A673 (cell line): ENCODE measurements at regions of chr5 and their contacts with region 1.

Region 1: DNA sequence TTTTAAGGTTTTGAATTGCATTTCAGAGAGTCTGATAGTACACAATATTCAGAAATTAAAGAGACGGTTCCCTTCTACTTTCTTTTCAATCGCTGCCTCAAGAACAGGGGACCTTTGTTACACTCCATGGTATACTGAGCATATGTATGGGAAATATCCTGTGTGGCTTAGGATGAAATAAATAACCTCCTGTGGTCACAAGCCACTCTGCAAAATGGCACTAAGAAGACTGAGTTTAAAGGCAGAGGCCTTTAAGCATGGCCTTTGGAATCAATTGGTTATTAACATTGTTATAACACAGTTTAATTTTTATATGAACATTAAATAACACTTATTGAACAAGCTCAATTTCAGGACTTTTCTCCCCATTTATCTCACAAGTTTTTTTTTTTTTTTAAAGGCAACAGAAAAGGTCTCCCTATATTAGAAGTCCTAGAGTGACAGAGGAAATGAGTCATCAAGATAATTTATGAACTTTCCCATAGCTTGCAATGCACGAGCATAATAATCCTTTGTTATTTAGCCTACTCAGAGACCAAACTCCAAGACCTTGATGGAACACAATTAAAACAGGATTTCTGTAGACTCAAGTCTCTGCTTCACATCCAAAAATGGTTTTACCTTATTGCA is 341.9 kb downstream of the TMEM167A start:
- DNase-seq: peak; percentile 94
- H3K4me3 ChIP-seq: no peak overlapping the region
- H3K27ac ChIP-seq: peak overlapping the region; percentile 54
- H3K4me1 ChIP-seq: peaks cover 28% of the 10 kb centered on the region
- H3K27me3 ChIP-seq: no peaks in the 10 kb centered on the region
- CTCF ChIP-seq: no peak

Region 2: GRCh38 chr5:82694886-82695285 is 40.4 kb before region 1 on chr5:
- CTCF ChIA-PET with region 1: no interaction called
- POLR2A ChIA-PET with region 1: no interaction called
- intact Hi-C with region 1: loop called (anchors 5 kb)
- DNase-seq: no peak
- H3K4me3 ChIP-seq: no peak overlapping the region
- H3K27ac ChIP-seq: no peak overlapping the region
- H3K4me1 ChIP-seq: no peaks in the 10 kb centered on the region
- H3K27me3 ChIP-seq: no peaks in the 10 kb centered on the region
- CTCF ChIP-seq: no peak

Region 3: GRCh38 chr5:82749461-82749820 is 14.2 kb after region 1 on chr5:
- CTCF ChIA-PET with region 1: interaction called, 3 read pairs
- POLR2A ChIA-PET with region 1: no interaction called
- intact Hi-C with region 1: loop called (anchors 1 kb)
- DNase-seq: peak; percentile 94
- H3K4me3 ChIP-seq: peak overlapping the region; percentile 18
- H3K27ac ChIP-seq: peak overlapping the region; percentile 64
- H3K4me1 ChIP-seq: peaks cover 41% of the 10 kb centered on the region
- H3K27me3 ChIP-seq: peaks cover 20% of the 10 kb centered on the region
- CTCF ChIP-seq: no peak

Region 4: DNA sequence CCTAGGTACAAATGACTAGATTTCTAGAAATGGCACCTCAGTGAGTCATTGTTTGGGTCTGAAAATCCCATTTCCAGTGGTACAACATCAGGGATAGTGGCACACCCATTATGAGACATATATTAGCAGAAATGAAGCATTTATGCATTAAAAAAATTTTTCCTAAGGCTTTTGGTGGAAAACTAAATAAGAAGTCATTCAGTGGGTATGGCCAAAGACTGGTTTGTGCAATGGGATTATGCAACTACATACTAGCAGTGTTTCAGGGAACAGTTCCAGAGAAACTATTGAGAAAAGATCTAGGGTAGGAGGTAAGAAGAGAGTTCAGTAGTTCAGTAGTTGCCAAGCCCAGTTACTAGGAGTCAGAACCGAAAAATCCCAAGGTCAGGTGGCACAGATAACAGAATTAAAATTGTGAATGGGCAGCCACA is 1091.9 kb after region 1 on chr5:
- CTCF ChIA-PET with region 1: no interaction called
- POLR2A ChIA-PET with region 1: no interaction called
- intact Hi-C with region 1: no loop called
- DNase-seq: no peak
- H3K4me3 ChIP-seq: no peak overlapping the region
- H3K27ac ChIP-seq: no peak overlapping the region
- H3K4me1 ChIP-seq: no peaks in the 10 kb centered on the region
- H3K27me3 ChIP-seq: no peaks in the 10 kb centered on the region
- CTCF ChIP-seq: no peak